Prostate gland (tissue), 2 donors: ENCODE measurements at regions of chr10 and their contacts with region 1.

Region 1: GRCh38 chr10:59991661-59992060 is 85.3 kb upstream of the CCDC6 start:
- DNase-seq: peak; percentile 84
- H3K4me3 ChIP-seq: no peak overlapping the region
- H3K27ac ChIP-seq: peak overlapping the region; percentile 42 to 58
- H3K4me1 ChIP-seq: peaks cover 4% of the 10 kb centered on the region
- H3K27me3 ChIP-seq: no peaks in the 10 kb centered on the region
- CTCF ChIP-seq: no peak
- POLR2A ChIP-seq: no peak

Region 2: GRCh38 chr10:60032723-60033122 is 41.1 kb after region 1 on chr10:
- intact Hi-C with region 1: loop called (anchors 5 kb)
- DNase-seq: peak; percentile 71
- H3K4me3 ChIP-seq: no peak overlapping the region
- H3K27ac ChIP-seq: no peak overlapping the region
- H3K4me1 ChIP-seq: no peaks in the 10 kb centered on the region
- H3K27me3 ChIP-seq: no peaks in the 10 kb centered on the region
- CTCF ChIP-seq: peak; percentile 24 to 75 (median 67)
- POLR2A ChIP-seq: no peak

Region 3: DNA sequence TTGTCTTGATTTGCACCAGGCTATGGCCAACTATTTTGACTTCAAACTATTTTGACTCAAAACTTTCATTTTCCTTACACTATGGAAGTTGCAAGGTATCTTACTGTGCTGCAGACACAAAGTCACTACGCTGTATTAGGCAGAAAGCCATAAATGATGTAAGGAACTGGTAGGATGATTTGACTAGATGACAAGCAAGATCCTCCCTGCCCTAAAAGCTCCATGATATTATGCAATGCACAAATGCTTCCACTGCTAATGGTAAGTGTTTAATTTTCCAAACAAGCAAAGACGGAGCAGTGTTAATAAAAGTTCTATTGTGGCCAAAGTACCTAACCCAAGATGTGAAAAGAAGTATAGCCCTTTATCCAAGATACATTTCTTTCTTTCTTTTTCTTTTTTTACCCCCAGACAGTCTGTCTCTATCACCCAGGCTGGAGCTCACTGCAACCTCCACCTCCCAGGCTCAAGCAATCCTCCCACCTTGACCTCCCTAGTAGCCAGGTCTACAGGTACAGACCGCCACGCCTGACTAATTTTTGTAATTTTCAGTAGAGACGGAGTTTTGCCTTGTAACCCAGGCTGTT is 299.8 kb after region 1 on chr10:
- intact Hi-C with region 1: no loop called
- DNase-seq: no peak
- H3K4me3 ChIP-seq: no peak overlapping the region
- H3K27ac ChIP-seq: no peak overlapping the region
- H3K4me1 ChIP-seq: no peaks in the 10 kb centered on the region
- H3K27me3 ChIP-seq: no peaks in the 10 kb centered on the region
- CTCF ChIP-seq: no peak
- POLR2A ChIP-seq: no peak